Heart left ventricle (tissue), 16 donors: ENCODE measurements at regions of chr9 and their contacts with region 1.

Region 1: GRCh38 chr9:128927731-128928411 is 7.1 kb downstream of the PHYHD1 start:
- DNase-seq: peak in 1 of 5 donors; percentile 60
- ATAC-seq: peak in 3 of 4 donors; percentile 72 to 82 (median 75)
- H3K4me3 ChIP-seq: no peak overlapping the region
- H3K27ac ChIP-seq: no peak overlapping the region
- H3K4me1 ChIP-seq: peaks cover 0 to 14% (median 1%) of the 10 kb centered on the region in 12 donors
- H3K27me3 ChIP-seq: no peaks in the 10 kb centered on the region
- CTCF ChIP-seq: peak; percentile 81 to 93 (median 86)
- POLR2A ChIP-seq: no peak

Region 2: GRCh38 chr9:128875790-128876160 is 52.1 kb before region 1 on chr9:
- intact Hi-C with region 1: loop called in 5 of 10 experiments (anchors 5 kb)
- DNase-seq: peak in 3 of 5 donors; percentile 61 to 79 (median 70)
- ATAC-seq: peak in 3 of 4 donors; percentile 69 to 85 (median 69)
- H3K4me3 ChIP-seq: no peak overlapping the region
- H3K27ac ChIP-seq: peak overlapping the region in 8 of 12 donors; percentile 50 to 79 (median 65)
- H3K4me1 ChIP-seq: peaks cover 0 to 47% (median 10%) of the 10 kb centered on the region in 12 donors
- H3K27me3 ChIP-seq: no peaks in the 10 kb centered on the region
- CTCF ChIP-seq: no peak
- POLR2A ChIP-seq: no peak